ENCODE measurements at regions of chr10 and their contacts with region 1.

Region 1: GRCh38 chr10:102072673-102073527 is 7.8 kb downstream of the HPS6 start:
- DNase-seq: peak; percentile 28
- H3K4me3 ChIP-seq: no peak overlapping the region
- CTCF ChIP-seq: peak; percentile 91

Region 2: GRCh38 chr10:101889256-101890210 is 183.4 kb before region 1 on chr10:
- CTCF ChIA-PET with region 1: interaction called, 23 read pairs
- POLR2A ChIA-PET with region 1: no interaction called
- DNase-seq: peak; percentile 45
- H3K4me3 ChIP-seq: no peak overlapping the region
- CTCF ChIP-seq: peak; percentile 84

Region 3: GRCh38 chr10:102055647-102056419 is 17.1 kb before region 1 on chr10 and contains the start of gene ARMH3:
- CTCF ChIA-PET with region 1: interaction called, 72 read pairs
- POLR2A ChIA-PET with region 1: no interaction called
- DNase-seq: peak; percentile 81
- H3K4me3 ChIP-seq: peak within 1 kb of the TSS; percentile 92
- CTCF ChIP-seq: no peak

Region 4: GRCh38 chr10:102090772-102091171 is 17.9 kb after region 1 on chr10:
- CTCF ChIA-PET with region 1: interaction called, 47 read pairs
- POLR2A ChIA-PET with region 1: interaction called, 3 read pairs
- DNase-seq: no peak
- H3K4me3 ChIP-seq: no peak overlapping the region
- CTCF ChIP-seq: no peak

Region 5: GRCh38 chr10:102106998-102107397 is 34.1 kb after region 1 on chr10:
- CTCF ChIA-PET with region 1: interaction called, 38 read pairs
- POLR2A ChIA-PET with region 1: no interaction called
- DNase-seq: no peak
- H3K4me3 ChIP-seq: no peak overlapping the region
- CTCF ChIP-seq: no peak